Spleen (tissue), 13 donors: ENCODE measurements at regions of chr11 and their contacts with region 1.

Region 1: DNA sequence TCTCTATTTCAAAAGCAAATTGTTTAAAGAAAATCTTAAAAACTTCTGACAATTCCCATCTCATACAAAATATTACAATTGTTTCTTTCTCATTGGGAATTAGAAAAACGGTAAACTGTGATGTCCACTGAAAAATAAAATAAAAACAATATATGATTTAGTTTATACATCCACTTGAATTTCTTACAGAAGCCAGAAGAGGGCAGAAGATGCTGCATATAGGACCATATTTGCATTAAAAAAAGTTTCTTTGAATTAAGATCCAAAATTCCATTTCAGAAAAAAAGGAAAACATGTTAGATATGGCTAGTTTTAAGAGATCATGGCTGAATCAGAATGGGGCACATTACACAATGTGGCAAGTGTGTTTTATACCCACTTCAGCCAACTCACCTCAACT is 39.3 kb upstream of the LRRC4C start:
- DNase-seq: no peak
- H3K4me3 ChIP-seq: no peak overlapping the region
- H3K27ac ChIP-seq: no peak overlapping the region
- H3K4me1 ChIP-seq: peaks cover 0 to 9% (median 0%) of the 10 kb centered on the region in 6 donors
- H3K27me3 ChIP-seq: no peaks in the 10 kb centered on the region
- CTCF ChIP-seq: peak in 3 of 11 experiments; percentile 9 to 21 (median 17)
- POLR2A ChIP-seq: no peak

Region 2: GRCh38 chr11:41377709-41378394 is 120.9 kb before region 1 on chr11:
- intact Hi-C with region 1: no loop called
- DNase-seq: no peak
- H3K4me3 ChIP-seq: no peak overlapping the region
- H3K27ac ChIP-seq: no peak overlapping the region
- H3K4me1 ChIP-seq: no peaks in the 10 kb centered on the region
- H3K27me3 ChIP-seq: no peaks in the 10 kb centered on the region
- CTCF ChIP-seq: no peak
- POLR2A ChIP-seq: no peak

Region 3: DNA sequence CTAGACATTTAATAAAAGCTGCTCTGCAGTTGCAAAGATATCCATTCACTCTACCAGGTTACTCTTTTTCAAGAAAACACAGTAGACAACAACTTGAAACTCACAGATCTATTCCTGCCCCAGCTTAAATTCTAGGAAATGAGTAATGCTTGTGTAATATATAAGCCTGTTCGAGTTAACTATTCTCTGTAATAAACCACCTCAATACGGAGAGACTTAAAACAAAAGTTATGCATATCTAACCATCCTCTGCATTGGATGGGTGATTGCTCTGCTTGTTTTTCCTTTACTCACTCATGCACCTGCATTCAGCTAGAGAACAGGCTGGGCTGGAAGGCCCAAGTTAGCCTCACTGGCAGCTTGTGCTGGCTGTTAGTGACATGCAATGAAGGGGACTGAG is 52.6 kb before region 1 on chr11:
- intact Hi-C with region 1: no loop called
- DNase-seq: no peak
- H3K4me3 ChIP-seq: no peak overlapping the region
- H3K27ac ChIP-seq: no peak overlapping the region
- H3K4me1 ChIP-seq: peaks cover 0 to 2% (median 0%) of the 10 kb centered on the region in 6 donors
- H3K27me3 ChIP-seq: no peaks in the 10 kb centered on the region
- CTCF ChIP-seq: no peak
- POLR2A ChIP-seq: no peak

Region 4: DNA sequence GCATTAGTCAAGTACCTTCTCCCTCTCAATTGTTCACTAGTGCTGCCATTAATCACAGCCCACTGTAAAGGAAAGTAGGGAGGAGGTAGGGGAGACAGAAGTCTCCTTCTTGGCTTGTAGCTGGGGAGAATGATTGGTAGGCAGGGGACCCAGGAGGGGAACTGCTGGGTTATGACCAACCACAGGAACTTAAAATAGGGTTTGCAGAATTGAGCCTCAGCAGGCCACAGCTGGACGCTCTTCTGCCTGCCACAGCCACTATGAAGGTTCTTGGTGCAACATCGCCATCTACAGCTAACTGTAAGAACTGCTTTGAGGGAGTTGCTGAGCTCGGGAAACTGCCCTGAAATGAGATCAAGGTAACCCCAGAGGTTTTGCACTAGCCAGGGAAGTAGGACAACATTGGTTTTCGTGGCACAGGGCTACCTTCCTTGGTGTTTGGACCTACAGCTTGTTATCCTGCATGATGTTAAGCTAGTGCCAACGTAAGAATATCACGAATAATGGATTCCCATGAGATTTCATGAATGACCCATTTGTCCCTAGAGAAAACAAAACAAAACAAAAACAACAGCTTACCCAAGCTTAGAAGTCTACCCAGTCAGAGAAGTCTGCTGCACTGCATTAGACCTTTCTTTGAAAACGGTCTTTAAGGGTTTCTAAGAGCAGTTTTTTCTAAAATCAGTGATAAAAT is 1026.0 kb after region 1 on chr11:
- intact Hi-C with region 1: loop called (anchors 10 kb)
- DNase-seq: no peak
- H3K4me3 ChIP-seq: no peak overlapping the region
- H3K27ac ChIP-seq: no peak overlapping the region
- H3K4me1 ChIP-seq: peaks cover 0 to 3% (median 0%) of the 10 kb centered on the region in 6 donors
- H3K27me3 ChIP-seq: no peaks in the 10 kb centered on the region
- CTCF ChIP-seq: peak in 10 of 11 experiments; percentile 13 to 79 (median 65)
- POLR2A ChIP-seq: no peak